ENCODE measurements at regions of chr14 and their contacts with region 1.

Region 1: GRCh38 chr14:20613094-20614037 is 22.2 kb upstream of the RNASE12 start:
- DNase-seq: peak; percentile 97
- ATAC-seq: peak; percentile 80
- H3K4me3 ChIP-seq: peak overlapping the region; percentile 46 to 61
- H3K27ac ChIP-seq: peak overlapping the region; percentile 57
- H3K4me1 ChIP-seq: peaks cover 12 to 39% of the 10 kb centered on the region in 2 experiments
- H3K27me3 ChIP-seq: no peaks in the 10 kb centered on the region
- CTCF ChIP-seq: peak; percentile 43 to 78 (median 74); a peak in 5 of 6 replicates
- POLR2A ChIP-seq: no peak
- RAD21 ChIP-seq: no peak; the same call in 1 of the 2 replicates

Region 2: GRCh38 chr14:20343092-20343861 is 270.1 kb before region 1 on chr14 and contains the start of gene PARP2:
- CTCF ChIA-PET with region 1: interaction called, 10 read pairs
- POLR2A ChIA-PET with region 1: interaction called, 7 read pairs
- RAD21 ChIA-PET with region 1: no interaction called
- intact Hi-C with region 1: loop called (anchors 1 kb)
- DNase-seq: peak; percentile 99
- ATAC-seq: peak; percentile 95
- H3K4me3 ChIP-seq: peak within 1 kb of the TSS; percentile 67 to 94
- H3K27ac ChIP-seq: peak within 1 kb of the TSS; percentile 95
- H3K4me1 ChIP-seq: peaks cover 5 to 15% of the 10 kb centered on the region in 2 experiments; a peak in 3 of 4 replicates
- H3K27me3 ChIP-seq: no peaks in the 10 kb centered on the region
- CTCF ChIP-seq: no peak
- POLR2A ChIP-seq: peak; percentile 100
- RAD21 ChIP-seq: no peak
- total RNA-seq, gene PARP2: 51.8 TPM

Region 3: GRCh38 chr14:20454516-20455354 is 158.6 kb before region 1 on chr14 and contains the starts of genes APEX1 and OSGEP:
- CTCF ChIA-PET with region 1: no interaction called
- POLR2A ChIA-PET with region 1: no interaction called
- RAD21 ChIA-PET with region 1: no interaction called
- intact Hi-C with region 1: loop called (anchors 1 kb)
- DNase-seq: peak; percentile 99
- ATAC-seq: peak; percentile 82
- H3K4me3 ChIP-seq: peak within 1 kb of the TSS; percentile 83 to 96
- H3K27ac ChIP-seq: peak within 1 kb of the TSS; percentile 97
- H3K4me1 ChIP-seq: peaks cover 12 to 16% of the 10 kb centered on the region in 2 experiments; a peak in 3 of 4 replicates
- H3K27me3 ChIP-seq: no peaks in the 10 kb centered on the region
- CTCF ChIP-seq: no peak
- POLR2A ChIP-seq: peak; percentile 59
- RAD21 ChIP-seq: no peak
- total RNA-seq, gene APEX1: 235 TPM
- total RNA-seq, gene OSGEP: 21.8 TPM

Region 4: GRCh38 chr14:20530771-20531571 is 82.4 kb before region 1 on chr14:
- CTCF ChIA-PET with region 1: no interaction called
- POLR2A ChIA-PET with region 1: no interaction called
- RAD21 ChIA-PET with region 1: interaction called in 1 of 2 experiments, 3 read pairs
- intact Hi-C with region 1: loop called (anchors 1 kb)
- DNase-seq: peak; percentile 78
- ATAC-seq: peak; percentile 97
- H3K4me3 ChIP-seq: no peak overlapping the region
- H3K27ac ChIP-seq: no peak overlapping the region
- H3K4me1 ChIP-seq: peaks cover 0 to 10% of the 10 kb centered on the region in 2 experiments; a peak in 2 of 4 replicates
- H3K27me3 ChIP-seq: no peaks in the 10 kb centered on the region
- CTCF ChIP-seq: peak; percentile 44 to 85 (median 80); a peak in 5 of 6 replicates
- POLR2A ChIP-seq: no peak
- RAD21 ChIP-seq: peak; percentile 42; the same call in 1 of the 2 replicates

Region 5: DNA sequence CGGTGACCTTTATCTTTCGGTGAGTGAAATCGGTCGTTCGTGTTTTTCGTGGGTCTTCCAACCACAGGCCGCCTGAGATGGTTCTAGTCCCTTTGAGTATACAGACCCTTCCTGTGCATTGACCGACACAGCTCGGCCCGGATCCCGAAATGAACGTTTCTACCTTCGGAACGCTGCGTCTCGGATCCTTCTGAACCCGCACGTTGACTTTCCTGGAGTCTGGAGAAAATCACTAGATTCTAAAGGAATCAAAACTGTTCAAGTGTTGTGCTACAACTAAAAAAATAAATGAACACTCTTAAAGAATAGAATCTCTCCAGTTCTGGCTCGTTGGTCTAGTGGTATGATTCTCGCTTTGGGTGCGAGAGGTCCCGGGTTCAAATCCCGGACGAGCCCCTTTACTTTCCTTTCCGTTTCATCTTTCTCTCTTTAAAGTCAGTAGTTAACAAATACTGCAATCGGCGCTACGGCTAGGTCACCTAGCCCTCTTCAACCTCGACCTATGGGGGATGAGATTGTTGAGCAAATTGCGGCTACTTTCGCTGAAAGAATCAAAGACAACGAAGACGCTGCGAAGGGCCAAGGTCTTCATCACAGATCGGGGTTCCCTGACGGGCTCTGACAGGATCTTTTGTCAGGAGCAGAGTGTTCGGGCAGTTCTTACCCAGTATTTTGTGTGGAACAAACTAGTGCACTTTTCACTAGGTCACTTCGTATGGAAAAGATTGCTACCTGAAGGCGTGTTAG is 19.5 kb after region 1 on chr14:
- CTCF ChIA-PET with region 1: interaction called, 5 read pairs
- POLR2A ChIA-PET with region 1: interaction called, 4 read pairs
- RAD21 ChIA-PET with region 1: interaction called in 1 of 2 experiments, 3 read pairs
- intact Hi-C with region 1: loop called (anchors 1 kb)
- DNase-seq: no peak
- ATAC-seq: peak; percentile 76
- H3K4me3 ChIP-seq: peak overlapping the region; percentile 30 to 42
- H3K27ac ChIP-seq: peak overlapping the region; percentile 30; the same call in 1 of the 2 replicates
- H3K4me1 ChIP-seq: peaks cover 0 to 28% of the 10 kb centered on the region in 2 experiments; a peak in 3 of 4 replicates
- H3K27me3 ChIP-seq: no peaks in the 10 kb centered on the region; the same call in 1 of the 2 replicates
- CTCF ChIP-seq: no peak
- POLR2A ChIP-seq: no peak
- RAD21 ChIP-seq: no peak

Region 6: GRCh38 chr14:20682435-20683124 is 69.2 kb after region 1 on chr14:
- CTCF ChIA-PET with region 1: interaction called, 33 read pairs
- POLR2A ChIA-PET with region 1: interaction called, 6 read pairs
- RAD21 ChIA-PET with region 1: interaction called, 3 read pairs
- intact Hi-C with region 1: loop called (anchors 1 kb)
- DNase-seq: peak; percentile 88
- ATAC-seq: peak; percentile 61
- H3K4me3 ChIP-seq: peak overlapping the region; percentile 65 to 72
- H3K27ac ChIP-seq: peak overlapping the region; percentile 97
- H3K4me1 ChIP-seq: peaks cover 27 to 64% of the 10 kb centered on the region in 2 experiments
- H3K27me3 ChIP-seq: no peaks in the 10 kb centered on the region
- CTCF ChIP-seq: 0 out of 6 replicates have a peak, but pooled peaks of 1 of the 3 experiments have one; percentile 7
- POLR2A ChIP-seq: peak; percentile 13
- RAD21 ChIP-seq: no peak

Region 7: DNA sequence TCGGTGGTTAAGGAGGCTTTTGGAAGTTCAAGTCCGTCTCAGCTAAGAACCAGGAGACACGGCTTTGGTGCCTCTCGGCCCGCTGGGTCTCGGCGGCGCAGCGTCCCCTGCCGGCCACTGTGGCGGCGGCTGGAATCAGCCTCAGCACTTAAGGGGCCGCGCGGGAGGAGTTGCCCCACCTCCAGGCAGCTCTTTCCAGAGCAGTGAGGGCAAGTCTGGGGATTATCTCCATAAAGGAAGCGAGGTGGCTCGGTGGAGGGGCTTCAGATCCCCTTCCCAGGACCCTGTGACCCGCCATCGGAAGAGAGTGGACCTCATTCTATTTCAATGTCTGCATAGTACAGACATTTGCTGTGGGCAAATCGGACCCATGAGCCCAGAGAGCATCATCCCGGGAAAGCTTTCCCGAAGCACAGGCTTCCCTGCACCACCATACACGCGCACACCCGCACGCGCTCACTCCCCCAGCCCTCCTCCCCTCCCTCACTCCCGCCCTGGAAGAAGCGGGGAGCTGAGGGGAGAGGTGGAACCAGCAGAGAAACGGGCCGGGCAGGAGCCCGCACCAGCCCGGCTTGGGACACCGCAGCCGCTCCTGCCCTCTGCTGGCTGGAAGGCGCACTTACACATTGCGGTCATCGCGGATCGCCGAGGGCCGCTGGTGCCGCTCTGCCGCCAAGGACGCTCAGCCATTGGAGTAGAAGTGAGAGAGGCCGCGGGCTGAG is 357.8 kb after region 1 on chr14:
- CTCF ChIA-PET with region 1: no interaction called
- POLR2A ChIA-PET with region 1: no interaction called
- RAD21 ChIA-PET with region 1: no interaction called
- intact Hi-C with region 1: loop called (anchors 10 kb)
- DNase-seq: peak; percentile 65
- ATAC-seq: peak; percentile 91
- H3K4me3 ChIP-seq: peak overlapping the region; percentile 61 to 63
- H3K27ac ChIP-seq: peak overlapping the region; percentile 39
- H3K4me1 ChIP-seq: peaks cover 10 to 30% of the 10 kb centered on the region in 2 experiments
- H3K27me3 ChIP-seq: no peaks in the 10 kb centered on the region
- CTCF ChIP-seq: peak; percentile 74 to 98 (median 95)
- POLR2A ChIP-seq: no peak
- RAD21 ChIP-seq: peak; percentile 56